Vagina (tissue), 2 donors: ENCODE measurements at regions of chr5 and their contacts with region 1.

Region 1: GRCh38 chr5:93582677-93583438 is at the start of gene NR2F1:
- DNase-seq: peak in 1 of 2 donors; percentile 97
- H3K4me3 ChIP-seq: peak within 1 kb of the TSS; percentile 59 to 66
- H3K27ac ChIP-seq: peak within 1 kb of the TSS; percentile 90
- H3K4me1 ChIP-seq: peaks cover 43% of the 10 kb centered on the region
- H3K27me3 ChIP-seq: no peaks in the 10 kb centered on the region
- CTCF ChIP-seq: peak; percentile 73 to 100 (median 96)
- POLR2A ChIP-seq: peak in 1 of 2 donors; percentile 67
- total RNA-seq, gene NR2F1: 97.2 TPM

Region 2: DNA sequence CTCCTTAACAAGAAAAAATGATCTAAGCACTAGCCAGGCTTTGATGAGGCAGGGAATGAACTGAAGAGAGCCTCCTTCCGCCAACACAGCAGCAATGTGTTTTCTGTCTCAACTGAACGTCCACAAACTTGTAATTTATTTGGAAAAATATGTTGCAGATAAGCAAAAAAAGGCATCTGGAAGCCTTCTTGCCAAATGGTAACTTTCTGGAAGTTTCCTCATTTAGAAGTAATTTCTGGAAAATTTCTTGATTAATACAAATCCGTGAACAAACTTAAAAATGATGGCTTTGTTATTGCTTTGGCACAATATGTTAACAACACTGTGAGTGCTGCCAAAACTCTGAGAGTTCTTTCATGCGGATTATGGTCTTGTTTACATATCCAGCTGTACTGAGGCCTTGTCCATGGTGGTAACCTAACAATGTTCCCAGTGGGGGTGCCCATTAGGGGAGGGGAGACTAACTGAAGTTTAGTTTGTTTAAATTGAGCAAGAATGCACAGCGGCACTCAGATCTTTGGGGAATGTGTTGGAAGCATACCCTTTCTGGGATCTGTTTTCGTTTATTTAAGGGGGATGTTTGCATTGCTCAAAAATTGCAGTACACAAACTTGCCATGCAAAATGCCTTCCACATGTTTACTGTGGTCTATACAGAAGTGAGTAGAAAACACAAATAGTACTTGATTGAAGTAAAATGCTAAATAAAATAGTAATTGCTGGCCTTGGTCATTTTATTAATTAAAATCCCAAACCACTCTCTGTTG is 336.6 kb before region 1 on chr5:
- intact Hi-C with region 1: loop called (anchors 10 kb)
- DNase-seq: no peak
- H3K4me3 ChIP-seq: no peak overlapping the region
- H3K27ac ChIP-seq: peak overlapping the region; percentile 58
- H3K4me1 ChIP-seq: peaks cover 21% of the 10 kb centered on the region
- H3K27me3 ChIP-seq: no peaks in the 10 kb centered on the region
- CTCF ChIP-seq: no peak
- POLR2A ChIP-seq: no peak

Region 3: GRCh38 chr5:93415819-93416218 is 167.0 kb before region 1 on chr5:
- intact Hi-C with region 1: no loop called
- DNase-seq: no peak
- H3K4me3 ChIP-seq: no peak overlapping the region
- H3K27ac ChIP-seq: no peak overlapping the region
- H3K4me1 ChIP-seq: no peaks in the 10 kb centered on the region
- H3K27me3 ChIP-seq: no peaks in the 10 kb centered on the region
- CTCF ChIP-seq: no peak
- POLR2A ChIP-seq: no peak

Region 4: DNA sequence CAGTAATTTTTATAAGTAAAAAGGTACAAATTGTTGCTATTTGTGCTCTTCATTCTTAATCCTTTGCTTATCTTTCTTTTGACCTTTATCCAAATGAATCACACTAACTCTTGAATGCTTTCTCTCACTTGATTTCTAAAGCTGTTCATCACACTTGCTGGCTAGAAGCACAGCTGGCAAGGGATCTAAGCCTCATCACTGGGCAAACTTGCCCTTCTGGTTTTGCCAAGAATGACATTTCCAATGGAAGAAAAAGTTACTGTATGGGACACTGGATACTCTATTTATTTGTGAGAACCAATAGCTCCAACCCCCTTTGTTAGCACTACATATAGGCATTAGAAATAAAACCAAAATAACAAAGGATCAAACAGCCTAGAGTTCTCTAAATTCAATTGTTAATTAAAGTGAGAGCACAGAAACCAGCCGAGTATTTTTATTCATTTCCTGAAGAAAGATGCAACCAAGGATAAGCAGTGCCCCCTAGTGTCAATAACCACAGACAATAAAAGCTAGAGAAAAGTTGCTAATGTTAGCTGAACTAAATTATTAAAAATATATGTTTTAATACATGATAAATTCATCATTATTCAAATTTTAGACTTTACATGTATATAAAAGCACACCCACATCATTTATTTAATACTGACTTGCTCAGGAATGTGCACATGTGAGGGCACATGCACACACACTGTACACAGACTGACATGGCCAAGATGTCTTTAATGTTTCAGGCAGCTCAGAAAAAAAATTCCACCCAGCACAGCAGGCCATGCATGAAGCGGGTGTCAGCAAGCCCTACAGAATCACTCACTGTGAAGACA is 218.3 kb after region 1 on chr5:
- intact Hi-C with region 1: loop called (anchors 10 kb)
- DNase-seq: no peak
- H3K4me3 ChIP-seq: no peak overlapping the region
- H3K27ac ChIP-seq: no peak overlapping the region
- H3K4me1 ChIP-seq: no peaks in the 10 kb centered on the region
- H3K27me3 ChIP-seq: no peaks in the 10 kb centered on the region
- CTCF ChIP-seq: peak; percentile 25 to 70 (median 67)
- POLR2A ChIP-seq: no peak